ENCODE measurements at regions of chr3 and their contacts with region 1.

Region 1: GRCh38 chr3:138915503-138916498 is 31.1 kb downstream of the FOXL2 start:
- DNase-seq: no peak
- H3K4me3 ChIP-seq: peak overlapping the region; percentile 89
- CTCF ChIP-seq: peak; percentile 89

Region 2: DNA sequence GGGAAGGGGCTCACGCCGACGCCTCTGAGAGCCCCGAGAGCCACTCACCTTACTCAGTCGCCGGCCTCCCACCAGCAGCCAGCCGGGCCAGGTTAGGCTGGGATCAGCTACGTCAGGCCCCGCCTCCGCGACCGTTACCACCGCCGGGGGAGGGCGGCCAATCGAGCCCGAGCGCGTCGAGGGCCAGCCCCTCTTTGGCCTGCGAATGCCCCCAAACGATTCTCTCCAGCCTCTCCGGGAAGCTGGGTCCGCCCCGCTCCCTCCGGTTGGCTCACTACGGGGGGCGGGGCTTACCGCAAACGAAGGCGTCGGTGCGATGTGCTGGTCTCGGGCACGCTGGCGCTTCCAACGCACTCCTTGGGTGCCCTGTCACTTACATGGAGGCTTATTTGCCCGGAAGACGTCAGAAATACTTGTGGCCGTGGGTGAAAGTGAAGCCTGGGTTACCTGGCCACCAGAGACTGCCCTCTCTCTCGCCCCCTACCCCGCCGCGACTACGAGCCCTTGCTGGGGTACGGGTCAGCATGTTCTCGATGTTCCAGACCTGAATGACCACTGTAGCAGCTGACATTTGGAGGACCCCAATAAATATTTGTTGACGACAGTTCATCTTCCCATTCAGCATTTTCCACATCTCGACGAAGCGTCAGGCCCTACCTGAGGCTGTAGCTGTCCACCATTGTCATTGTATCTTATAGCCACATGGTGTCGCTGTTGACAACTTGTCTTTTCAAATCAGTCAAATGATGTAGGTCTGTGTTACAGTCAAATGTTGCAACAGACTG is 321.5 kb before region 1 on chr3 and contains the start of gene CEP70:
- CTCF ChIA-PET with region 1: interaction called, 731 read pairs
- POLR2A ChIA-PET with region 1: interaction called, 5 read pairs
- DNase-seq: peak; percentile 65
- H3K4me3 ChIP-seq: peak within 1 kb of the TSS; percentile 84
- CTCF ChIP-seq: peak; percentile 68

Region 3: DNA sequence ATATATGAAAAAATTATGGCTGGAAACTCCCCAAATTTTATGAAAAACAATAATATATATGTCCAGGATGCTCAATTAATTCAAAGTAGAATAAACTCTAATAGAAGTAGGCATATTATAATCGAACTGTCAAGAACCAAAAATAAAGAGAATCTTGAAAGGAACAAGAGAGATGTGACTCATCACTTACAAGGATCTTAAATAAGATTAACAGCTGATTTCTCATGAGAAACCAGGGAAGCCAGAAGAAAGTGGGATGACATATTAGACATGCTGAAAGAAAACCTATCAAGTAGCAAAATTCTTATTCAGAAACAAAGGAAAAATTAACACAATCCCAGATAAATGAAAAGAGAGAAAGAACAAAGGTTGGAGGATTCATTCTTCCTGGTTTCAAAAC is 240.4 kb before region 1 on chr3:
- CTCF ChIA-PET with region 1: interaction called, 13 read pairs
- POLR2A ChIA-PET with region 1: no interaction called
- DNase-seq: no peak
- H3K4me3 ChIP-seq: no peak overlapping the region
- CTCF ChIP-seq: no peak

Region 4: GRCh38 chr3:138726946-138727730 is 188.7 kb before region 1 on chr3:
- CTCF ChIA-PET with region 1: interaction called, 31 read pairs
- POLR2A ChIA-PET with region 1: no interaction called
- DNase-seq: peak; percentile 26
- H3K4me3 ChIP-seq: no peak overlapping the region
- CTCF ChIP-seq: no peak

Region 5: DNA sequence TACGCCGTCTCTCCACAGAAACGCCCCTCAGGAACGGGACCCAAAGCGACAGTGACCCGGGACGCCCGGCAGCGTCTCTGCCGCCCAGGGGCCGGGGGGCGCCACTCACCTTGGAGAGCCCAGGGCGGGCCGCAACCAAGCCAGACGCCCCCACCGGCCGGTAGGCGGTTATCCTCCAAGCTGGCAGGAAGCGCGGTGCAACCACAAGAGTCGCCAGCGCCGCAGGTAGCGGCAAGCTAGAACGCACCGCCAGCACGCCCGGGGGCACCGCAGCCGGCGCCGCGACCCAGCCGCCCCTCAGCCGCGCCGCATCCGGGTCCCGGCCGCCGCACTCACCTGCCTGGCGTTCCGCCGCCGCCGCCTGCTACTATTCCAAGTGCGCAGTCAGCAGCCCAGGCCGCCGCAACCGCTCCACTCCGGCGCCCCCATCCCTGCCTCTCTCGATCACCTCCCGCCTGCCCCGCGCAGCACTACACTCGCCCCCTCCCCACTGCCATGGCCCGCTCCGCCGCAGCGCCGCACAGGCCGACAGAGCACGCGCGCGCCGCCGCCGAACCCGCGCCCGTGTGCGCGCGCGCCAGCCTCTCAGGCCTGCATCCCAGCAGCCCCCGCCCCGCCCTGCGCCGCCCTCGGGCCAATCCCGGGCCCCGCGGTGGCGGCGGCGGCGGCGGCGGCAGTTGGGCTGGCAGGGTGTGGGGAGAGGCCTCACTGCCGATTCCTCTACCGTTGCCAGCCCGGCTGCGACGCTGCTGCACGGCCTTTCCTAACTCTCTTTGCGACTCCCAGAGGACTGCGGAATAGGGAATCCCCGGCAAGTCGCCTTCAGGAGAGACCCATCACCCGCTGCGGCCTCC is 81.2 kb before region 1 on chr3 and contains the start of gene PIK3CB:
- CTCF ChIA-PET with region 1: interaction called, 12 read pairs
- POLR2A ChIA-PET with region 1: no interaction called
- DNase-seq: no peak
- H3K4me3 ChIP-seq: peak within 1 kb of the TSS; percentile 79
- CTCF ChIP-seq: peak; percentile 39

Region 6: GRCh38 chr3:138898301-138898700 is 17.5 kb before region 1 on chr3:
- CTCF ChIA-PET with region 1: interaction called, 117 read pairs
- POLR2A ChIA-PET with region 1: no interaction called
- DNase-seq: no peak
- H3K4me3 ChIP-seq: no peak overlapping the region
- CTCF ChIP-seq: no peak

Region 7: GRCh38 chr3:139006051-139006716 is 90.4 kb after region 1 on chr3 and contains the start of gene PRR23A:
- CTCF ChIA-PET with region 1: no interaction called
- POLR2A ChIA-PET with region 1: no interaction called
- DNase-seq: no peak
- H3K4me3 ChIP-seq: no peak within 1 kb of the TSS
- CTCF ChIP-seq: no peak

Region 8: DNA sequence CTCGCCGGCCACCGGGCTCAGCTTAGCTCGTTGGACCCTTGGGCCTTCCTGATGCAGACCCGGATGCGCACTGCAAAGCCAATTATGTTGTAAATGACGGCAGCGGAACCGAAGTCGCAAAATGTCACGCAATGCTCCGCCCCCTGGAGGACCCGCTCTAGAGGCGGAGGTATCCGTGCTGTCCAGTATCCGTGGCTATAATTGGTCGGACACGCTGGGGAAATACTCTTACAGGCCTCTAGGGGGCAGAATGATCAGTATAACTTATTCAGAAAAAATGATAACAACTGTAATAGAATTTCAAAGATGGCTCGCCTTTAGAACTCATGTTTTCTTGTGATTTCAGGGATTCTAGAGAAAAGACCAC is 105.0 kb after region 1 on chr3 and contains the start of gene PRR23B:
- CTCF ChIA-PET with region 1: no interaction called
- POLR2A ChIA-PET with region 1: no interaction called
- DNase-seq: no peak
- H3K4me3 ChIP-seq: no peak within 1 kb of the TSS
- CTCF ChIP-seq: no peak

Measured in AG04449 (cell line).